Posterior vena cava (tissue), 2 donors: ENCODE measurements at regions of chr15 and their contacts with region 1.

Region 1: DNA sequence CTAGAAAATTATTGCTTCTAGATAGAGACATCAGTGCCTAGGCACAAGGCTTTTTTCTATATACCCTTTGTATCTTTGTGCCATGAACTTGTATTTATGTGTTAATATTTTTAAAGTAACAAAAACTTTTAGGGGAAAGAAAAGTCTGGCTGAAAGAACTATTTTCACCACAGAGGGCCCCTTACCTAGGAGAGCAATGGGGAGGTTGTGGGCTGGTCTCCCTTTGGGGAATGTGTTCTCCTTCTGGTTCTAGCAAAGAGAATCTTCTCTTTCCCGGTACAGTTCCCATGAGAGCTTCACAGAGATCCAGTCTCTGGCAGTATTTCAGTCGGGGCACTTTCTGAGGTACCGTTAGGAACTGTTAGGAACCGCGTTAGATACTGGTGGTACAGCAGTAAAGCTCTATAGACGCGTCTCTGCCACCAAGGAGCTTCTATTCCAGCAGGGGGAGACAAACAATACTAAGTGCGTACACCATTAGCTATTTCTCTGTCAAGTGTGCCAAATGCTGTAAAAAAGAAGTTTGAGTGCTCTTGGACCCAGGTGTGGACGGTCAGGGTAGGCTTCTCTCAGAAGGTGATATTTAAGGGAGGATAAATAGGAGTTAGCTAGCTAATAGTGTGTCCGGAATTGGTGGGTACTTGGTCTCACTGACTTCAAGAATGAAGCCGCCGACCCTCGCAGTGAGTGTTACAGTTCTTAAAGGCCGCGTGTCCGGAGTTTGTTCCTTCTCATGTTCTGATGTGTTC is 4.6 kb upstream of the EPB42 start:
- DNase-seq: peak; percentile 53

Region 2: GRCh38 chr15:42121682-42122081 is 1103.7 kb before region 1 on chr15:
- intact Hi-C with region 1: loop called in 1 of 2 experiments (anchors 5 kb)
- DNase-seq: no peak

Region 3: GRCh38 chr15:43285609-43286037 is 60.2 kb after region 1 on chr15:
- intact Hi-C with region 1: loop called in 1 of 2 experiments (anchors 2 kb)
- DNase-seq: no peak

Region 4: GRCh38 chr15:43493703-43494472 is 268.5 kb after region 1 on chr15:
- intact Hi-C with region 1: no loop called
- DNase-seq: no peak

Region 5: DNA sequence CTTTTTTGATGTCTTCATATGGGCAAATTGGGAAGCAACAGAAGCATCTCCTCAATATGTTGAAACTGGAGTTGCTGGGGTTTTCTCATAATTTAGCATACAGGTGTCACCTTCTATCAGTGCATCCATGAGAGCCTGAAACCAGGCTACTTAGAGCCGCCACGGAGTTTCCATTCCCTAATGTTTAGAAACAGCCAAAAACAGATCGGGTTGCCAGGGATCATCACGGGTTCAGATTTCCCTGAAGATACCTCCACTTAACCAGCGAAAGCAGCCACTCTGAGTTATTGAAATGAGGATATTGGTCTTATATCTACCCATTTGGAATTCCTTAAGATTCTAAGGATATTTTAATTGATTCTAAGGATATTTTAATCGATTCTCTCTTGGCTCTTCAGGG is 1745.7 kb after region 1 on chr15:
- intact Hi-C with region 1: no loop called
- DNase-seq: no peak